PC-9 (cell line): ENCODE measurements at regions of chr17 and their contacts with region 1.

Region 1: GRCh38 chr17:73371285-73371684 is 59.5 kb upstream of the CDC42EP4 start:
- DNase-seq: no peak
- H3K4me3 ChIP-seq: no peak overlapping the region
- H3K27ac ChIP-seq: no peak overlapping the region
- H3K4me1 ChIP-seq: no peaks in the 10 kb centered on the region
- H3K27me3 ChIP-seq: peaks cover 32% of the 10 kb centered on the region
- CTCF ChIP-seq: no peak

Region 2: DNA sequence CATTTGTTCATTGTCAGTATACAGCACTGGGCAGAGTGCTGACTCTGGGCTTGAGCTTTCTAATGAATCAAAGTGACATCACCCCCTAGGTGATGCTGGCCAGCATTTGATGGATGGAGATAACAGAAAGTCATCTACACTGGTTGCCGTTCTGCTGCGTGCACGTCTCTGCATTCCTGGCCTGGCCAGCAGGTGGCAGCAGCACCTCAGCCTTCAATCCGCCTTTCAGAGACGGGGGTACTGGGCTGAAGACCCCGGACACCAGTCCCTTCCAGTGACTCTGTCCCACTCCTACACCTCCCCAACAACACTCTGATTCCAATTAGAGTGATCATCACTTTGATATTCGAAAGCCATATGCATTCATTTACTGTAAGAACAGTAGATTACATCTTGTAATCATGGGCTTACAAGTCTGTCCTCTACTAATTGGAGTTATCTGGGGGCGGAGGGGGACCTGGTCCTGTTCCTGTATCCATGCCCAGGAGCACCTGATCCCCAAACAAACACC is 115.6 kb before region 1 on chr17:
- CTCF ChIA-PET with region 1: interaction called, 15 read pairs
- POLR2A ChIA-PET with region 1: no interaction called
- intact Hi-C with region 1: loop called (anchors 1 kb)
- DNase-seq: peak; percentile 51 to 63
- H3K4me3 ChIP-seq: no peak overlapping the region
- H3K27ac ChIP-seq: no peak overlapping the region
- H3K4me1 ChIP-seq: no peaks in the 10 kb centered on the region
- H3K27me3 ChIP-seq: no peaks in the 10 kb centered on the region
- CTCF ChIP-seq: peak; percentile 99

Region 3: GRCh38 chr17:73389411-73389810 is 18.1 kb after region 1 on chr17:
- CTCF ChIA-PET with region 1: interaction called, 12 read pairs
- POLR2A ChIA-PET with region 1: no interaction called
- intact Hi-C with region 1: no loop called
- DNase-seq: no peak
- H3K4me3 ChIP-seq: no peak overlapping the region
- H3K27ac ChIP-seq: no peak overlapping the region
- H3K4me1 ChIP-seq: no peaks in the 10 kb centered on the region
- H3K27me3 ChIP-seq: peaks cover 74% of the 10 kb centered on the region
- CTCF ChIP-seq: no peak